Activated CD4-positive, alpha-beta memory T cell treated with anti-CD3 and anti-CD28 coated beads for 36 hours (primary cell): ENCODE measurements at regions of chrX and their contacts with region 1.

Region 1: GRCh38 chrX:153470435-153471363 is at the start of gene HAUS7:
- DNase-seq: peak; percentile 92
- H3K4me3 Mint-ChIP-seq: peak within 1 kb of the TSS; percentile 79
- H3K27ac Mint-ChIP-seq: peak within 1 kb of the TSS; percentile 51
- H3K4me1 Mint-ChIP-seq: peaks cover 17% of the 10 kb centered on the region
- H3K27me3 Mint-ChIP-seq: no peaks in the 10 kb centered on the region
- total RNA-seq, gene HAUS7: 59.1 to 62.3 TPM

Region 2: DNA sequence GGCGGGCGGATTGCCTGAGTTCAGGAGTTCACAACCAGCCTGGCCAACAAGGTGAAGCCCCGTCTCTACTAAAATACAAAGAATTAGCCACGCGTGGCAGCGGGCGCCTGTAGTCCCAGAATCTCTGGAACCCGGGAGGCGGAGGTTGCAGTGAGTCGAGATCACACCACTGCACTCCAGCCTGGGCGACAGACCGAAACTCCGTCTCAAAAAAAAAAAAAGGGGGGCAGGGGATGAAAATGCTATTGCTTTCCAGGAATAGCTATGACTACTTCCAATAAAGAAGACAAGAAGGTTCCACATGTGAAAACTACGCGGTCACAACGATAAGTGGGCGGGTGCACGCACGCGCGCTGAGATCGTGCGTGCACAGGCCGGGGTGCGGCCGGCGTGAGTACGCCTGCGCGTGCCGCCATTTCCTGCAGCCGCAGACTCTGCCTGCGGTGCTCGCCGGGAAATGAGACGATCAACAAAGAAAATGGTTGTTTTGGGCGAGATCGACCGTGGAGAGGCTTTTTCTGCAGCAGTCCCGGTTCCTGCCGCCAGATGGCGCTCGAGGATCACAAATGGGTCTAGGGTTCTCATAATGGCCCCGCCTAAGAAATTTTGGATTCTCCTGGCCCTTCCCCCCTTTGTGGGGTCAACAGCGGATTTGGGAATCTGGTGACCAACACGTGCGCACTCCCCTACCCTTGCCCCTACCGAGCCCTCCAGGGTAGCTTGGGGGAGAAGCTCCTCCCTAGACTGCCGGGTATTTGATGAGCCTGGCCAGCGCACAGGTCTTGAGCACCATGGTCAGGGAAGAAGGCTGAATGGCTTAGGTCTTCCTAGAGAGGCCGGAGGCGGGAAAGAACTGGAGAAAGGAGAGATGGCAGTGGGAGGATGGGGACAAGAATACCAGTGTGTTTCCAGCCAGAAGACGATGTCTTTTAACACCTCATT is 511.9 kb before region 1 on chrX:
- CTCF ChIA-PET with region 1: interaction called, 4 read pairs
- POLR2A ChIA-PET with region 1: no interaction called
- intact Hi-C with region 1: loop called (anchors 1 kb)
- DNase-seq: peak; percentile 93
- H3K4me3 Mint-ChIP-seq: peak overlapping the region; percentile 51
- H3K27ac Mint-ChIP-seq: peak overlapping the region; percentile 87
- H3K4me1 Mint-ChIP-seq: peaks cover 6% of the 10 kb centered on the region
- H3K27me3 Mint-ChIP-seq: no peaks in the 10 kb centered on the region

Region 3: GRCh38 chrX:153507484-153508178 is 36.9 kb after region 1 on chrX:
- CTCF ChIA-PET with region 1: interaction called, 49 read pairs
- POLR2A ChIA-PET with region 1: no interaction called
- intact Hi-C with region 1: loop called (anchors 1 kb)
- DNase-seq: peak; percentile 86
- H3K4me3 Mint-ChIP-seq: no peak overlapping the region
- H3K27ac Mint-ChIP-seq: no peak overlapping the region
- H3K4me1 Mint-ChIP-seq: peaks cover 10% of the 10 kb centered on the region
- H3K27me3 Mint-ChIP-seq: no peaks in the 10 kb centered on the region

Region 4: DNA sequence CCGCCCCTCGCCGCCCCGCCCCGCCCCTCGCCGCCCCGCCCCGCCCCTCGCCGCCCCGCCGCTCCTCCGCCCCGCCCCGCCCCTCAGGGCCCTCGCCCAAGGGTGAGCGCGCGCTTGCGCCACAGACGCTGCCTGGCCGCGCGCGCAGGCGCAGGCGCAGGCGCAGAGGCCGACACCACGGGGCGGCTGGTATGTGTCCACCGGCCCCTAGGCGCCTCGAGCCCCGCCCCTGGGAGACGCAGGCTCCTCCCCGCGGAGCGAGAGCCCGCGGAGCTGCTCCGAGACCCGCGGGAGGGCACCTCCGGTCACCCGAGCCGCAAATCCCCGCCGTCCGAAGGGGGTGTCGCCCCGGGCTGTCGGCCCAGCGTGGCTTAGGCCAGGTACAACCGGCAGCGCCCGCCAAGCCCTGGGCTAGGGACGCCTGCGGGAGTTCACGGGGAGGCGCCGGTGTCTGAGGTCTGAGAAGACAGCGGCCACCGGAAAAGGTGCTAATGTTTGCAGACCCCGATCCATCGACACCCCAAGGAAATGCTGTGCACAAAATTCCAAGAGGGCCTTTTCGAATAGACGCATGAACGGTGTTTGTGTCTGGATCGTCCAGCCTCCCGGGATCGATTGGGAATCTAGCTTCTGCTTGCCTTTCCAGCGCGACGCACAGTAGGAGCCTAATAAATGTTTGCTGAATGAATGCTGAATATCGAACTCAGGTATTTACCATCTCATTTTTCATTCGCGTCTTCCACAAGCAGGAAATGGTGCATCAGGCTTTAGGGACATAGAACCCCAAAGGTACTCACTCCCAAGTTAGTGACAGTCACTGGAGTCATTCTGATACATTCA is 128.7 kb after region 1 on chrX:
- CTCF ChIA-PET with region 1: interaction called, 3 read pairs
- POLR2A ChIA-PET with region 1: no interaction called
- intact Hi-C with region 1: loop called (anchors 2 kb)
- DNase-seq: peak; percentile 91
- H3K4me3 Mint-ChIP-seq: peak overlapping the region; percentile 82
- H3K27ac Mint-ChIP-seq: peak overlapping the region; percentile 60
- H3K4me1 Mint-ChIP-seq: peaks cover 41% of the 10 kb centered on the region
- H3K27me3 Mint-ChIP-seq: no peaks in the 10 kb centered on the region

Region 5: GRCh38 chrX:153724252-153725040 is 253.7 kb after region 1 on chrX and contains the starts of genes ABCD1 and BCAP31:
- CTCF ChIA-PET with region 1: no interaction called
- POLR2A ChIA-PET with region 1: no interaction called
- intact Hi-C with region 1: loop called (anchors 1 kb)
- DNase-seq: peak; percentile 91
- H3K4me3 Mint-ChIP-seq: peak within 1 kb of the TSS; percentile 86
- H3K27ac Mint-ChIP-seq: peak within 1 kb of the TSS; percentile 88
- H3K4me1 Mint-ChIP-seq: peaks cover 24% of the 10 kb centered on the region
- H3K27me3 Mint-ChIP-seq: no peaks in the 10 kb centered on the region
- total RNA-seq, gene ABCD1: 4.8 TPM
- total RNA-seq, gene BCAP31: 119 to 121 TPM

Region 6: DNA sequence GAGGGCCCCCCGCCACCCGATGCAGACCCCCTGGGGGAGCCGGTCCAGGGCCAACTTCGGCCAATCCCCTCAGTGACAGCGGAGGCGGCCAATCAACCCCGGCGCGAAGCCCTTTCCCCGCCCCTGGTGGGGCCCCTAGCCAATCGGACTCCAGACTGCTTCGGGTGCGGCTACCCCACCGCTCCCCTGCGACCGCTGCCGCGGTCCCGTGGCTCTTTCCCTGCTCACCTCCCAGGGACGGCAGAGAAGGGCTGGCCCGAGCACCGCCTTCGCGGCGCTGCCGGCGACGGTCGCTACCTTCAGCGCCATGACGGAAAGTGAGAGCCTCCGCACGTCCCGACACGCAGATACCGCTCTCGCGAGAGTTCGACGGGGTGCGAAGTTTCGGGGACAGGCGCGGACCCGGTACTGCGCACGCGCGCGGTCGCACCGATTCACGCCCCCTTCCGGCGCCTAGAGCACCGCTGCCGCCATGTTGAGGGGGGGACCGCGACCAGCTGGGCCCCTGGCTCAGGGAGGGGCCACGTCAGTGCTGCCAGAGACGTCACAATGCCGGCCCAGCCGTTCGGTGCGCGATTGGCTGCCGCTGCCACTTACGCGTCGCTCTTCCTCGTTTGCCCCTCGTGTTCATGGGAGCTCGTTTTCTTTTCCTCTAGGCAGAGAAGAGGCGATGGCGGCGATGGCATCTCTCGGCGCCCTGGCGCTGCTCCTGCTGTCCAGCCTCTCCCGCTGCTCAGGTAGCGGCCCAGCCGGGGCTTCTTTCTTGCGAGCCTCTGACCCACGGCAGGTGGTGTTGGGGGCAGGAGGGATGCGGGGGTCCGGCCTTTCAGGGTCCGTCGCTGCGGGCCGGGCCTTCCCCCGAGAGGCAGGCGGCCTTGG is 323.6 kb after region 1 on chrX and contains the starts of genes IDH3G and SSR4:
- CTCF ChIA-PET with region 1: no interaction called
- POLR2A ChIA-PET with region 1: no interaction called
- intact Hi-C with region 1: loop called (anchors 10 kb)
- DNase-seq: peak; percentile 95
- H3K4me3 Mint-ChIP-seq: peak within 1 kb of the TSS; percentile 90
- H3K27ac Mint-ChIP-seq: peak within 1 kb of the TSS; percentile 80
- H3K4me1 Mint-ChIP-seq: peaks cover 18% of the 10 kb centered on the region
- H3K27me3 Mint-ChIP-seq: no peaks in the 10 kb centered on the region
- total RNA-seq, gene IDH3G: 45.9 to 51.5 TPM
- total RNA-seq, gene SSR4: 194 to 203 TPM

Region 7: GRCh38 chrX:153934473-153935325 is 464.0 kb after region 1 on chrX and contains the start of gene NAA10:
- CTCF ChIA-PET with region 1: no interaction called
- POLR2A ChIA-PET with region 1: no interaction called
- intact Hi-C with region 1: loop called (anchors 10 kb)
- DNase-seq: peak; percentile 73
- H3K4me3 Mint-ChIP-seq: peak within 1 kb of the TSS; percentile 88
- H3K27ac Mint-ChIP-seq: peak within 1 kb of the TSS; percentile 74
- H3K4me1 Mint-ChIP-seq: peaks cover 32% of the 10 kb centered on the region
- H3K27me3 Mint-ChIP-seq: no peaks in the 10 kb centered on the region
- total RNA-seq, gene NAA10: 106 to 115 TPM